AG04450 (cell line): ENCODE measurements at regions of chr12 and their contacts with region 1.

Region 1: GRCh38 chr12:9750276-9751203 is 10.2 kb downstream of the CD69 start:
- DNase-seq: peak; percentile 13
- H3K4me3 ChIP-seq: no peak overlapping the region
- H3K27ac ChIP-seq: no peak overlapping the region
- H3K27me3 ChIP-seq: no peaks in the 10 kb centered on the region
- CTCF ChIP-seq: peak; percentile 83

Region 2: DNA sequence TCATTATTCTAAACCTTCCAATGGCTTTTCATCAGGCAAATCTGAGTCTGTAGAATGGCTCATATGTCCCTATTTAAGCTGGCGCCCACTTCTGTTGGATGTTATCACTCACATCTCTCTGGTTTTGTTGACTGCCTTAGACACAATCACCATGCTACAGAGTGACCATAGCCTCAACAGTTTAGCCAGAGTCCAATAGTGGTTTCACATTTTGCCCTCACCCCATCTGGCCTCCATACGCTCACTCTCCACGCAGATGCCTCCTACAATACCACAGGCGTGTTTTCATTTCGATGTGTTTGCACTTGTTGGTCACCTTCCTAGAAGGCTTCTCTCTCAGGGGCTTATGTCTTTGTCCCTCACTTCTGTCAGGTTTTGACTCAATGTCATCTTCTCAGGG is 146.3 kb before region 1 on chr12:
- CTCF ChIA-PET with region 1: no interaction called
- POLR2A ChIA-PET with region 1: no interaction called
- DNase-seq: no peak
- H3K4me3 ChIP-seq: no peak overlapping the region
- H3K27ac ChIP-seq: no peak overlapping the region
- H3K27me3 ChIP-seq: no peaks in the 10 kb centered on the region
- CTCF ChIP-seq: no peak

Region 3: GRCh38 chr12:9721394-9722092 is 29.0 kb before region 1 on chr12:
- CTCF ChIA-PET with region 1: interaction called, 14 read pairs
- POLR2A ChIA-PET with region 1: no interaction called
- DNase-seq: no peak
- H3K4me3 ChIP-seq: no peak overlapping the region
- H3K27ac ChIP-seq: no peak overlapping the region
- H3K27me3 ChIP-seq: peaks cover 3% of the 10 kb centered on the region
- CTCF ChIP-seq: no peak

Region 4: GRCh38 chr12:9773216-9773877 is 22.8 kb after region 1 on chr12:
- CTCF ChIA-PET with region 1: interaction called, 13 read pairs
- POLR2A ChIA-PET with region 1: interaction called, 4 read pairs
- DNase-seq: no peak
- H3K4me3 ChIP-seq: no peak overlapping the region
- H3K27ac ChIP-seq: no peak overlapping the region
- H3K27me3 ChIP-seq: no peaks in the 10 kb centered on the region
- CTCF ChIP-seq: no peak

Region 5: GRCh38 chr12:9829990-9830389 is 79.5 kb after region 1 on chr12:
- CTCF ChIA-PET with region 1: interaction called, 11 read pairs
- POLR2A ChIA-PET with region 1: no interaction called
- DNase-seq: no peak
- H3K4me3 ChIP-seq: no peak overlapping the region
- H3K27ac ChIP-seq: no peak overlapping the region
- H3K27me3 ChIP-seq: no peaks in the 10 kb centered on the region
- CTCF ChIP-seq: no peak

Region 6: GRCh38 chr12:9925708-9926393 is 175.3 kb after region 1 on chr12:
- CTCF ChIA-PET with region 1: interaction called, 128 read pairs
- POLR2A ChIA-PET with region 1: no interaction called
- DNase-seq: peak; percentile 6
- H3K4me3 ChIP-seq: no peak overlapping the region
- H3K27ac ChIP-seq: no peak overlapping the region
- H3K27me3 ChIP-seq: no peaks in the 10 kb centered on the region
- CTCF ChIP-seq: peak; percentile 63

Region 7: GRCh38 chr12:10001171-10001776 is 250.7 kb after region 1 on chr12:
- CTCF ChIA-PET with region 1: interaction called, 14 read pairs
- POLR2A ChIA-PET with region 1: no interaction called
- DNase-seq: no peak
- H3K4me3 ChIP-seq: no peak overlapping the region
- H3K27ac ChIP-seq: no peak overlapping the region
- H3K27me3 ChIP-seq: no peaks in the 10 kb centered on the region
- CTCF ChIP-seq: no peak